Caco-2 (cell line): ENCODE measurements at regions of chr4 and their contacts with region 1.

Region 1: DNA sequence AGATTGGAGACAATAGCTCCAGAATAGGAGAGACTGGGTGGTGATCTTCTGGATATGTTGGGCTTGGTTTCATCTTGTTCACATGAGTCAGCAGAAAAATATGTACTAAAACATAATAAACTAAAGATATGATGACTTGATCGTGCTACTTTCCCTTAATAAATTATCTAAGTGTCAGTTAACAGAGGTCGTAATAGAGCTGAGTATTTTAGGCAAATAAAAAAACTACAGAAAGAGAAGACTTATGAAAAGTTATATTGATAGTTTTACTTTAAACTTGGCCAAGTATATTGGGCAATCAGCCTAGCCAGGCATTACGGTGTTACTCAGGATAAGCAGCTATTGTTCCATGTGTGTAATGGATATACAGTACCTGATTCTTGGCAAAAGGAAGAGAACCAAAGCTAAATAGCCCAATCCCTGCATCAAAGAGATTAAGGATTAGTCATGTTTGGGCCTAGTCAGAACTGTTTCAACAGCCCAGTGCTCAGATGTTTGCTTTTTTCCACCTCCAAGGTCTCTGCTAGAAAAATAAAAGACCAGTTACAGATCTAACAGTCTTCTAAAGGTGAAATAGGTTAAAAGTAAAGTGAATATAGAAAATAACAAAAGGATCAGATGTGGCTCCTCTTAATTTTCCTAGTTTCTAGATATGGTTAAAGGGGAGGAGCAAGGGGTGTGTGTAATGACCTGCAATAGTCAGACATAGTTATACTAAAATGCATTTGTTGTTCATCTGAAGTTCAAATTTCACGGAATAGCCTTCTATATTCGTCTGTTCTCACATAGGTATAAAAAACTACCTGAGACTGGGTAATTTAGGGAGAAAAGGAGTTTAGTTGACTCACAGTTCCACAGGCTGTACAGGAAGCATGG is 262.6 kb downstream of the ADGRL3 start:
- DNase-seq: peak in 1 of 2 experiments; percentile 4
- H3K4me3 ChIP-seq: no peak overlapping the region
- H3K4me3 Mint-ChIP-seq: no peak overlapping the region
- H3K27ac Mint-ChIP-seq: peak overlapping the region; percentile 76
- H3K4me1 ChIP-seq: no peaks in the 10 kb centered on the region
- H3K4me1 Mint-ChIP-seq: peaks cover 16% of the 10 kb centered on the region
- H3K27me3 ChIP-seq: no peaks in the 10 kb centered on the region
- H3K27me3 Mint-ChIP-seq: no peaks in the 10 kb centered on the region
- CTCF ChIP-seq: no peak

Region 2: DNA sequence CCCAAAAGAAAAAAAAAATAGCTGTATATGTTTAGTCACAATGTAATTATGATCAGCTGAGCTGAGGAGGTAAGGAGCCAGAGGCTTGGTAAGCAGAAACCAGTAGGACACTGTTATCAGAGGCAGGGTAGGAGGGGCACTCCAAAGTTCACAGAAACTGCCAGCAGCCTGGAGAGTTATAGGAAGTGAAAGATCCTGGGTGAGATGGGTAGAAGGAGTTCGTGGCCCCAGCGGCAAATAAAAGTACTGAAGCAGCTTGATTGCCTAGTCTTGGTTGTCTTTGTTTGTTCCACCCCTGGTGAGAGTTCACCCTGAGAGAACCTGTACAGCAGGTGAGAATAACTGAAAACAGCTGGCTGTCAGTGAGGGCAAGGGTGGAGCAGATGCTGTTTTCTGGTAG is 78.3 kb after region 1 on chr4:
- CTCF ChIA-PET with region 1: no interaction called
- POLR2A ChIA-PET with region 1: no interaction called
- intact Hi-C with region 1: loop called (anchors 5 kb)
- DNase-seq: peak; percentile 87 to 90
- H3K4me3 ChIP-seq: no peak overlapping the region
- H3K4me3 Mint-ChIP-seq: peak overlapping the region; percentile 64
- H3K27ac Mint-ChIP-seq: peak overlapping the region; percentile 89
- H3K4me1 ChIP-seq: peaks cover 20% of the 10 kb centered on the region
- H3K4me1 Mint-ChIP-seq: peaks cover 25% of the 10 kb centered on the region
- H3K27me3 ChIP-seq: no peaks in the 10 kb centered on the region
- H3K27me3 Mint-ChIP-seq: no peaks in the 10 kb centered on the region
- CTCF ChIP-seq: peak in 1 of 2 experiments; percentile 19

Region 3: DNA sequence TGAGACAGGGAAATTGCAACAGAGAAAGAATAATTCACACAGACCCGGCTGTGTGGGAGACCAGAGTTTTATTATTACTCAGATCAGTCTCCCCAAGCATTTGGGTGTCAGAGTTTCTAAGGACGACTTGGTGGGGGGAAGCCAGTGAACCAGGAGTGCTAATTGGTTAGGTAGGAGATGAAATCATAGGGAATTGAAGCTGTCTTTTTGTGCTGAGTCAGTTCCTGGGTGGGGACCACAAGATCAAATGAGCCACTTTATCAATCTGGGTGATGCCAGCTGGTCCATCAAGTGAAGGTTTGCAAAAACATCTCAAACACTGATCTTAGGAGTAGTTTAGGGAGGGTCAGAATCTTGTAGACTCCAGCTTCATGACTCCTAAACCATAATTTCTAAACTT is 298.1 kb after region 1 on chr4:
- CTCF ChIA-PET with region 1: no interaction called
- POLR2A ChIA-PET with region 1: no interaction called
- intact Hi-C with region 1: no loop called
- DNase-seq: no peak
- H3K4me3 ChIP-seq: no peak overlapping the region
- H3K4me3 Mint-ChIP-seq: no peak overlapping the region
- H3K27ac Mint-ChIP-seq: no peak overlapping the region
- H3K4me1 ChIP-seq: no peaks in the 10 kb centered on the region
- H3K4me1 Mint-ChIP-seq: peaks cover 2% of the 10 kb centered on the region
- H3K27me3 ChIP-seq: no peaks in the 10 kb centered on the region
- H3K27me3 Mint-ChIP-seq: no peaks in the 10 kb centered on the region
- CTCF ChIP-seq: no peak